ENCODE measurements at regions of chr1 and their contacts with region 1.

Region 1: GRCh38 chr1:202348509-202349205 is at the start of gene PPP1R12B:
- DNase-seq: peak; percentile 96
- H3K4me3 Mint-ChIP-seq: peak within 1 kb of the TSS; percentile 90
- H3K27ac Mint-ChIP-seq: peak within 1 kb of the TSS; percentile 90
- H3K4me1 Mint-ChIP-seq: peaks cover 34% of the 10 kb centered on the region
- H3K27me3 Mint-ChIP-seq: no peaks in the 10 kb centered on the region
- total RNA-seq, gene PPP1R12B: 11.1 and 15.8 TPM in 2 replicates

Region 2: DNA sequence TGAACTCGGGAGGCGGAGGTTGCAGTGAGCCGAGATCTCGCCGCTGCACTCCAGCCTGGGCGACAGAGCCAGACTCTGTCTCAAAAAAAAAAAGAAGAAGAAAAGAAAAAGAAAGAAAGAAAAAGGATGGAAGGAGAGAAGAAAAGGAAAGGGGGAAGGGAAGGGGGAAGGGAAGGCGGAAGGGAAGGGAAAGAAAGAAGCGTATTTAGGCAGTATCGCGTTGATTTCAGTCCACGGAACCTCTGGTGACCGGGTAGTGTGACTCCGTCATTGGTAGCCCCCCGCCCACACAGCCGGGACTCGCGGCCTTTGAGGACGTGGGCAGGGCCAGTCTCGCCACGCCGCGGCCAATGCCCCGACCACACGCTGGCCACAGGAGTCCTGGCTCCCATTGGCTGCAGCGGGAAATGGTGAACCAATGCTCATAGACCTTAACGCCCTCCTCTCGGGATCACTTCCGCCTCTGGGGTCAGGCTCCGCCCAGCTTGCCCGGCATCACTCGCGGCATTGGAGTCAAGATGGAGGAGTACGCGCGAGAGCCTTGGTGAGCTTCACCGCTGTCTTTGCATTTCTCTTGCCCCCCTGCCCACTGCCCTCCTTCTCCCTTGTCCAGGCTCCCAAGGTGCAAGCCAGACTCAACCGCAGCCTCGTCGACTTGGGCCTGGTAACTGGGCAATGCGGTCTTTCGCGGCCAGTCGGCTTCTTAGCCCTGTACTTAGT is 393.5 kb before region 1 on chr1 and contains the start of gene TIMM17A:
- intact Hi-C with region 1: loop called (anchors 2 kb)
- DNase-seq: peak; percentile 94
- H3K4me3 Mint-ChIP-seq: peak within 1 kb of the TSS; percentile 98
- H3K27ac Mint-ChIP-seq: peak within 1 kb of the TSS; percentile 97
- H3K4me1 Mint-ChIP-seq: peaks cover 21% of the 10 kb centered on the region
- H3K27me3 Mint-ChIP-seq: peaks cover 3% of the 10 kb centered on the region
- total RNA-seq, gene TIMM17A: 117 and 127 TPM in 2 replicates

Region 3: GRCh38 chr1:202315576-202316168 is 33.0 kb before region 1 on chr1:
- intact Hi-C with region 1: no loop called
- DNase-seq: peak; percentile 63
- H3K4me3 Mint-ChIP-seq: no peak overlapping the region
- H3K27ac Mint-ChIP-seq: no peak overlapping the region
- H3K4me1 Mint-ChIP-seq: peaks cover 4% of the 10 kb centered on the region
- H3K27me3 Mint-ChIP-seq: peaks cover 14% of the 10 kb centered on the region

Region 4: GRCh38 chr1:202571347-202572339 is 223.0 kb after region 1 on chr1:
- intact Hi-C with region 1: loop called (anchors 2 kb)
- DNase-seq: no peak
- H3K4me3 Mint-ChIP-seq: no peak overlapping the region
- H3K27ac Mint-ChIP-seq: no peak overlapping the region
- H3K4me1 Mint-ChIP-seq: peaks cover 6% of the 10 kb centered on the region
- H3K27me3 Mint-ChIP-seq: no peaks in the 10 kb centered on the region

Region 5: DNA sequence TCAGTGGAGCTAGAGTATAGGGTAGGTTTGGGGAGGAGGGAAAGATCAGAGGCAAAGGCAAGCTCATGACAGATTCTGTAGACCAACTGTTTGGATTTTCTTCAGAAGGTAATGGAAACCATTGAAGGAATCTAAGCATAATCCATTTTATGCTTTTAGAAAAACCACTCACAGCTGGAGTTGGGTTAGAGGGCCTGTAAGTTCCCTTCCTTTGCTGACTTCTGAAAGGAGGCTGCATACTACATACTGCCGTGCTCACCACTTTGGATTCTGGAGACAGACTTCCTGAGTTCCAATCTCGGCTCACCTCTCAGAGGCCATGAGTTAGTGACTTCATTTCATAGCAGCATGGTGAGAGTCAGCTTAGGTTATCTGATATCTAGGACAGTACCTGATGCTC is 368.0 kb after region 1 on chr1:
- intact Hi-C with region 1: loop called (anchors 1 kb)
- DNase-seq: no peak
- H3K4me3 Mint-ChIP-seq: no peak overlapping the region
- H3K27ac Mint-ChIP-seq: no peak overlapping the region
- H3K4me1 Mint-ChIP-seq: no peaks in the 10 kb centered on the region
- H3K27me3 Mint-ChIP-seq: peaks cover 48% of the 10 kb centered on the region

Region 6: DNA sequence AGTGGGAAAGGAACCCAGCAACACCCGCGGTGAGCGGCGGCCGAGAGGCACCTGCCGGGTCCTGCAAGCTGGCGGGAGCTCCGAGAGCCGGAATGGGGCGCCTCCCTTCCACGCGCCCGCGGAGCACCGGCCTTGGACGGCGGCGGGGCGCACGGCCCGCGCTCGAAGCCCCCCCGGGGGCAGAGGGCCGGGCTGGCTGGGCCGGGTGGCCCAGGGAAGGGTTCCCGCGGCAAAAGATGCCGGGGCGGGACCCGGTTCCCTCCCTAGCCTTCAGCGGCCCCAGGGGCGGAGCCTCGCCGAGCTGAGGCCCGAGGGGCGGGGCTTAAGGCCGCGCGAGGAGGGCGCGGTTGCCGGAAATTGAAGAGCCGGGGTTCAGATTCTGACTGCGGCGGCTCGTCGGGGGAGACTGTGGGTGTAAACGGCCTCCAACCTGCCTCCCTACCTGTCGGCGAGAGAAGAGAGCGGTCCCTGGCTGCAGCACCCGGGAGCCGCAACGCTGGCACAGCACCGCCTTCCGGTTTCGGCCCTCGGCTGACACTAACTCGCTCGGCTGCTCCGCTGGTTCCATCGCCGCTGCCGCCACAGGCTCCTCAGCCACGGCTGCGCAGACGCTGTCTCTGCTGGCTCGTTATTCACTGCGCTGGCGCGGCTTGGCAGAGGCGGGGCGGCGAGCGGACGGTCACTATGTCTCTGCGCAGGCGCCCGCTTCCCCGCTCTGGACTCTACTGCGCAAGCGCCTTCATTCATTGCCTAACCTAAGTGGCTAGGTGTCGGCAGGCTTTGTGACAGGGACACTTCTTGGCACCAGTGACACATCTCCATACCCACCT is 540.1 kb after region 1 on chr1 and contains the start of gene RABIF:
- intact Hi-C with region 1: loop called (anchors 2 kb)
- DNase-seq: peak; percentile 95
- H3K4me3 Mint-ChIP-seq: peak within 1 kb of the TSS; percentile 96
- H3K27ac Mint-ChIP-seq: peak within 1 kb of the TSS; percentile 98
- H3K4me1 Mint-ChIP-seq: peaks cover 25% of the 10 kb centered on the region
- H3K27me3 Mint-ChIP-seq: no peaks in the 10 kb centered on the region
- total RNA-seq, gene RABIF: 11.8 and 13.4 TPM in 2 replicates

Region 7: DNA sequence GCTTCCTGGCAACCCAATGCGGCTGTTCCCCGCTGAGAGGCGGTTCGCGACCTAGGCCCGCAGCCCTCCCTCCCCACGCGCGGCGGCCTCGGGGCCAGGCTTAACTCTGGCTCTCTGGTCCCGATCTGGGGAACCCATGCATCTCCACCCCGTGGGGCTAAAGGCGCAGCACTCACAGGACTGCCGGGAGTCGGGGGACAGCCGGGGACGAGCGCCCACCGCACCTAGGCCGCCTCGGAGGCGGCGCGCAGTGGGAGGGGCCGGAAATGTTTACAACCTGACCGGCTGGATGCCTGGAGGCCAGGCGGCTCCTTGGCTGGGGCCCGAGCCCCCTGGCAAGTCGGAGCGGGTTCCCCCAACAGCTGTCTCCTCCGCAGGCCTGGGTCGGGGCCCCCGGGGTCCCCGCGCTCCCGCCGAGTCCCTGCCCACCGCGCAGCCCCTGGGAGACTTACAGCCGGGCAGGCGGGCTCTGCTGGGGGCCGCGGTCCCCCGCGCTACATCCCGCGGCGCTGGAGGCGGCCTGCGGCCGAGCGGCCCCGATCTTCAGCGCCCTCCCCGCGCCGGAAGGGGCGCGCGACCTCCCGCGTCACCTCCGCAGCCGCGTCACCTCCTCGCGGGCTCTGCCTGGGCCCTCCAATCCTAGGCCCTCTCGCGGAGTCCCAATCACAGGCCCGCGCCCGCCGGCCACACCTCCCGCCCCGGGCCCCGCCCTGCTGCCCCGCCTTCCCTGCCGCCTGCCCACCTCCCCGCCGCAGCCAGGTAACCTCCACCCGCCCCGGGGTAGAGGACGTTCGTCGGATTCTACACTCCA is 609.3 kb after region 1 on chr1 and contains the start of gene ADIPOR1:
- intact Hi-C with region 1: loop called (anchors 2 kb)
- DNase-seq: peak; percentile 92
- H3K4me3 Mint-ChIP-seq: peak within 1 kb of the TSS; percentile 89
- H3K27ac Mint-ChIP-seq: peak within 1 kb of the TSS; percentile 80
- H3K4me1 Mint-ChIP-seq: peaks cover 46% of the 10 kb centered on the region
- H3K27me3 Mint-ChIP-seq: peaks cover 2% of the 10 kb centered on the region
- total RNA-seq, gene ADIPOR1: 88.7 and 93.3 TPM in 2 replicates

Region 8: GRCh38 chr1:203026031-203026989 is 677.7 kb after region 1 on chr1 and contains the start of gene PPFIA4:
- intact Hi-C with region 1: loop called (anchors 5 kb)
- DNase-seq: peak; percentile 87
- H3K4me3 Mint-ChIP-seq: peak within 1 kb of the TSS; percentile 85
- H3K27ac Mint-ChIP-seq: peak within 1 kb of the TSS; percentile 65
- H3K4me1 Mint-ChIP-seq: peaks cover 25% of the 10 kb centered on the region
- H3K27me3 Mint-ChIP-seq: no peaks in the 10 kb centered on the region
- total RNA-seq, gene PPFIA4: 11.5 and 14.9 TPM in 2 replicates